CD4-positive, alpha-beta memory T cell (primary cell): ENCODE measurements at regions of chr4 and their contacts with region 1.

Region 1: GRCh38 chr4:83484500-83485461 is at the start of gene ABRAXAS1:
- DNase-seq: peak; percentile 93 to 96 (median 95)
- H3K4me3 ChIP-seq: peak within 1 kb of the TSS; percentile 67 to 79
- H3K4me3 Mint-ChIP-seq: peak within 1 kb of the TSS; percentile 91 to 100 (median 96)
- H3K27ac ChIP-seq: peak within 1 kb of the TSS; percentile 68
- H3K27ac Mint-ChIP-seq: peak within 1 kb of the TSS; percentile 95 to 98 (median 97)
- H3K4me1 ChIP-seq: peaks cover 23% of the 10 kb centered on the region
- H3K4me1 Mint-ChIP-seq: peaks cover 18 to 36% (median 27%) of the 10 kb centered on the region in 4 donors
- H3K27me3 ChIP-seq: no peaks in the 10 kb centered on the region
- H3K27me3 Mint-ChIP-seq: peaks cover 0 to 2% of the 10 kb centered on the region in 2 donors
- total RNA-seq, gene ABRAXAS1: 35.9 to 36.7 TPM

Region 2: DNA sequence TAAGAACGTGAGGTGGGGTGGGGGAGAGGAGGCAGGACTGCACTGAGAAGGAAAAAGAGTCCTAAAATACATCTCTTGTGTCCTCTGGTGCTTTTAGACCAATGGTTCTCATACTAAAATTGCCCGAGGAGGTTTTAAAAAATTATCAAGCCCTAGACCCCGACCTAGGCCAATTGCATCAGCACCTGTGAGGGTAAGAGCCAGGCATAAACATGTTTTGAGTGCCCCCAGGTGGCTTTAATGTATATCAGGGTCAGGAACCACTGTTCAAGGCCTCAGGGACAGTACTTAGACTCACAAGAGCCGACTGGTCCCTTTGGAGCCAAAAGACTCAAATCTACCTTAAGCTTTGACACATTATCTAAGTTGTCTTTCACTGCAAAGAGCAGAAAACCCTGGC is 885.4 kb before region 1 on chr4:
- CTCF ChIA-PET with region 1: no interaction called
- POLR2A ChIA-PET with region 1: no interaction called
- intact Hi-C with region 1: no loop called
- DNase-seq: no peak
- H3K4me3 ChIP-seq: no peak overlapping the region
- H3K4me3 Mint-ChIP-seq: no peak overlapping the region
- H3K27ac ChIP-seq: no peak overlapping the region
- H3K27ac Mint-ChIP-seq: no peak overlapping the region
- H3K4me1 ChIP-seq: no peaks in the 10 kb centered on the region
- H3K4me1 Mint-ChIP-seq: no peaks in the 10 kb centered on the region
- H3K27me3 ChIP-seq: no peaks in the 10 kb centered on the region
- H3K27me3 Mint-ChIP-seq: peaks cover 13 to 17% of the 10 kb centered on the region in 2 donors

Region 3: DNA sequence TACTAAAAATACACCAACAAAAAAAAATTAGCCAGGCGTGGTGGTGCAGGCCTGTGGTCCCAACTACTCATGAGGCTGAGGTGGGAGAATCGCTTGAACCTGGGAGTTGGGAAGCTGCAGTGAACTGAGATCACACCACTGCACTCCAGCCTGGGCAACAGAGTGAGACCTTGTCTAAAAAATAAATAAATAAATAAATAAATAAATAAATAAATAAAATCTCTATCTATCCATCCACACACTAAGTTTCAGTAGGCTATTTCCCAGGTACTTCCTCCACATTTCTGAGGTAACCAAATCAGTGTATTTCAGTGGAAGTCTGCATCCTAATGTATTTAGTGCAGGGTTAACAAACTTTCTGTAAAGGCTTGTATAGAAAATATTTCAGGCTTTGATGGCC is 10.8 kb before region 1 on chr4:
- CTCF ChIA-PET with region 1: interaction called, 3 read pairs
- POLR2A ChIA-PET with region 1: interaction called, 18 read pairs
- intact Hi-C with region 1: no loop called
- DNase-seq: no peak
- H3K4me3 ChIP-seq: no peak overlapping the region
- H3K4me3 Mint-ChIP-seq: no peak overlapping the region
- H3K27ac ChIP-seq: no peak overlapping the region
- H3K27ac Mint-ChIP-seq: peak overlapping the region in 1 of 7 donors; percentile 37
- H3K4me1 ChIP-seq: no peaks in the 10 kb centered on the region
- H3K4me1 Mint-ChIP-seq: peaks cover 0 to 4% (median 1%) of the 10 kb centered on the region in 4 donors
- H3K27me3 ChIP-seq: no peaks in the 10 kb centered on the region
- H3K27me3 Mint-ChIP-seq: no peaks in the 10 kb centered on the region

Region 4: DNA sequence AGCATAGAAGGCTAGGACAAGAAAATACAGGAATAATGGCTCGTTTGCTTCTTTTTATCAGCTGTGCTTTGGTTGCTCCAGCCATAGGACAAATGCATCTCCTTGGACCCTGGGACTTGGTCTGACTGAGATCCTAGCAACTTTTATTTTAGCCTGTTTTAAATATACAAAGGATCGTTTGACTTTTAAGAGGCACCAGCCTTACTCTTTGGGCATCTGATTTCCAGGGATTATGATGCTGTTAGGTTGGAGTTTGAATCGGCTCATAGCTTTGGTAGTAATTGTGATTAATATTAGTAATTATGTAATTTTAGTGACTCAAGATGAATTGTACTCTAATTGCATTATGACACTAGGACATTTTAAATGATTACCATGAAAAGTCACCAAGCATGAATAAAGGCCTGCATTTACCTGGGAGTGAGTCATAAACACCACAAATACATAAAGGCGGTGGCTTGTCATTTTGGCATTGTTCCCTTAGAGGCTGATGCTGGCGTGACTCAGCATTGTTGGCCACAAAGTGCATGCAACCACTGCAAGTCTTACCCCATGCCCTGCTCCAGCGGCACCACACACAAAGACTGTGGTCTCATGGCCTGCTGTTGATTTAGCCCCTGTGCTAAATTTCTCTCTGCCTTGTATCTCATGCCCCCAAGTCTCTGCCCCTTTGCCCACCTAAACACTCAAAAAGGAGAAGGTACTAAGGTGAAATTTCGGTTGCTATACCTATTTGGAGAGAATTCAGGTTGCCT is 63.5 kb after region 1 on chr4:
- CTCF ChIA-PET with region 1: no interaction called
- POLR2A ChIA-PET with region 1: no interaction called
- intact Hi-C with region 1: loop called (anchors 1 kb)
- DNase-seq: peak; percentile 21 to 78 (median 40)
- H3K4me3 ChIP-seq: no peak overlapping the region
- H3K4me3 Mint-ChIP-seq: no peak overlapping the region
- H3K27ac ChIP-seq: no peak overlapping the region
- H3K27ac Mint-ChIP-seq: peak overlapping the region in 2 of 7 donors; percentile 28 to 70
- H3K4me1 ChIP-seq: peaks cover 8% of the 10 kb centered on the region
- H3K4me1 Mint-ChIP-seq: peaks cover 0 to 14% (median 3%) of the 10 kb centered on the region in 4 donors
- H3K27me3 ChIP-seq: no peaks in the 10 kb centered on the region
- H3K27me3 Mint-ChIP-seq: no peaks in the 10 kb centered on the region